Dorsolateral prefrontal cortex (tissue), 120 donors: ENCODE measurements at regions of chr10 and their contacts with region 1.

Region 1: GRCh38 chr10:62038609-62039190 is 137.2 kb downstream of the ARID5B start:
- DNase-seq: peak in 9 of 10 donors; percentile 34 to 78 (median 69)
- H3K4me3 ChIP-seq: peak overlapping the region in 46 of 59 donors; percentile 8 to 60 (median 34)
- H3K27ac ChIP-seq: peak overlapping the region in 21 of 59 donors; percentile 3 to 68 (median 32)
- H3K27me3 ChIP-seq: no peaks in the 10 kb centered on the region
- CTCF ChIP-seq: peak; percentile 54 to 98 (median 87)

Region 2: GRCh38 chr10:62199584-62199983 is 160.9 kb after region 1 on chr10:
- intact Hi-C with region 1: loop called (anchors 5 kb)
- DNase-seq: no peak
- H3K4me3 ChIP-seq: no peak overlapping the region
- H3K27ac ChIP-seq: no peak overlapping the region
- H3K27me3 ChIP-seq: no peaks in the 10 kb centered on the region
- CTCF ChIP-seq: no peak

Region 3: DNA sequence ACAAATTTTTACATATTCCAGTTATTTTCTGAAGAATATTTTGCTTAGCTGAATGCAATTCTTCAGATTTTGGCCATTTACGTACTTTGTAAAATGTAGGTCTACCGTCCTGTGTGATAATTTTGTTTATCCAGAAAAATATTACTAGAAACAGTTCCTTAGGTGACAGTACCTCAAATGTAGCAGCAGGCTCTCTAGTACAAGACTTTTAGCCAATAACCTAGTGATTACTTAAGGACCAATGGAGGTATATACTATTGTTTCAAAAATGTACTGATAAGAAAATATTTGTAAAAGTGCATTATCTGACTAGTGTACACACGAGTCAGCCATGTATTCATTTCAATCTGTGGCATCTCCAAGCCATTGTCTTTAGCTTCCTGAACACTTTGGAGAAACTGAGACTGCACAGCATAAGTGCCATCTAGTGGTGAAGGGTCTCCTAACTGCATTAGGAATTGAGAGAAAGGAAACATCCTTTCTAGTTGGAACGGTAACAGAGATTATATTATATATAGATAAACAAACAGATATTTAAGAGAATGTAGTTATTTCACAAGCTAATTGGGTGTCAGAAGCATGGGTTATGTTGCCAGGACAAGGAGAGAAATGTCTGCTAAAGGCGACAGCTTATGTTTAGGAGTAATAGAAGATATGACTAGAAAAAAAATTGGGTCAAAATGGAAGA is 206.2 kb after region 1 on chr10:
- intact Hi-C with region 1: loop called (anchors 2 to 5 kb)
- DNase-seq: peak in 4 of 10 donors; percentile 11 to 57 (median 22)
- H3K4me3 ChIP-seq: peak overlapping the region in 12 of 59 donors; percentile 3 to 29 (median 8)
- H3K27ac ChIP-seq: peak overlapping the region in 4 of 59 donors; percentile 6 to 39 (median 28)
- H3K27me3 ChIP-seq: no peaks in the 10 kb centered on the region
- CTCF ChIP-seq: peak; percentile 74 to 99 (median 93)